ENCODE measurements at regions of chr4 and their contacts with region 1.

Region 1: DNA sequence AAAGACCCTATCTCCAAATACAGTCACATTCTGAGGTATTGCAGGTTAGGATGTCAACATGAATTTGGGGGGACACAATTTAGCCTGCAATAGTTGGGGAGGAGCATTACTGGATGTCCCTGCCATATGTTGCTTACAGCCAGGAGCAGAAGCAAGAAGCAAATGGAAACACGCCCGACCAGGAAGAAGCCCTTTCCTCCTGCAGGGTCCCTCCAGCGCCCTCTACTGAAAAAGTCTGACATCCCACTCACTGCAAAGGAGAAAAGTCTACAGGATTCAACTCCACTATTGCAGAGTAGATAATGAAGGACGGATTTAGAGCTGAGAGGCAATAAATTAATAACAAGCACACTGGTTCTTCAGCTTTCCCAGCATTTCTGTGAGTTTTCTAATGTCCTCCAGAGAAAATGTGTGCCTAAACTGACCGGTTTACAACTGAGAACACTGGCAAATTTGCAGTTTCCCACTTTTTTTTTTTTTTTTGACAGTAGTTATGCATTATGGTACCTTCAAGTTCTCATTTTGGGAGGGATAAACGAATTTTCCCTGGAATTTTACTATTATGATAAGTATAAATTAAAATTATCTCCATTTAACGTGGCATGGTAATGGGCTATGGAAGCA is 31.7 kb downstream of the COQ2 start:
- DNase-seq: peak in 1 of 2 donors; percentile 58
- ATAC-seq: peak in 5 of 8 donors; percentile 41 to 66 (median 59)
- H3K4me3 ChIP-seq: no peak overlapping the region
- H3K27ac ChIP-seq: no peak overlapping the region
- H3K4me1 ChIP-seq: peaks cover 0 to 28% (median 2%) of the 10 kb centered on the region in 9 donors
- H3K27me3 ChIP-seq: no peaks in the 10 kb centered on the region
- CTCF ChIP-seq: peak in 8 of 9 donors; percentile 14 to 82 (median 54)

Region 2: GRCh38 chr4:83089410-83090158 is 163.3 kb before region 1 on chr4:
- intact Hi-C with region 1: no loop called
- DNase-seq: no peak
- ATAC-seq: no peak
- H3K4me3 ChIP-seq: no peak overlapping the region
- H3K27ac ChIP-seq: no peak overlapping the region
- H3K4me1 ChIP-seq: peaks cover 0 to 6% (median 0%) of the 10 kb centered on the region in 9 donors
- H3K27me3 ChIP-seq: peaks cover 0 to 5% (median 0%) of the 10 kb centered on the region in 7 donors
- CTCF ChIP-seq: no peak

Region 3: DNA sequence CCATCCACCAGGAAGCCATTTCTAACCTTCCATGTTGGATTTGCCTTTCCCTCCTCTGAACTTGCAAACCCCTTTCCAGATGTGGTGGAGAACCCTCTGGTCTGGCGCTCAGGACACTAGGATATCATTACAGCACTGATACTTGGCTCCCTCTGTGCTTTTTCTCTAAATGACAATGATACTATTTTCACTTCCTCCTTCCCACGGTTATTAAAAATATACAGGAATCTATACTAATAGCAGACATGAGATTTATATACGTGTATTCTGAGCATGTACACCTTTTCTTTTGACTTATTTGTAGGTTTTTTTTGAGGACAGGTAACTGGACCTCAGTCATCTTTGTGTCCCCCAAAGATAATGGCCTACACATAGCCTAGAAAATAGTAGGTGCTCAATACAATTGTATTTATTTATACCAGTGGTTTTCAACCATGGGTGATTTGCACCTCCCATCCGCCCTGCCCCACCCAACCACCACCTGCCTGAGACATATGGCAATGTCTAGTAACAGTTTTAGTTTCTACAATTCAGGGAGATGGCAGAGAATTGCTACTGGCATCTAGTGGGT is 78.0 kb before region 1 on chr4:
- intact Hi-C with region 1: no loop called
- DNase-seq: no peak
- ATAC-seq: no peak
- H3K4me3 ChIP-seq: no peak overlapping the region
- H3K27ac ChIP-seq: no peak overlapping the region
- H3K4me1 ChIP-seq: peaks cover 0 to 12% (median 0%) of the 10 kb centered on the region in 9 donors
- H3K27me3 ChIP-seq: no peaks in the 10 kb centered on the region
- CTCF ChIP-seq: no peak

Region 4: DNA sequence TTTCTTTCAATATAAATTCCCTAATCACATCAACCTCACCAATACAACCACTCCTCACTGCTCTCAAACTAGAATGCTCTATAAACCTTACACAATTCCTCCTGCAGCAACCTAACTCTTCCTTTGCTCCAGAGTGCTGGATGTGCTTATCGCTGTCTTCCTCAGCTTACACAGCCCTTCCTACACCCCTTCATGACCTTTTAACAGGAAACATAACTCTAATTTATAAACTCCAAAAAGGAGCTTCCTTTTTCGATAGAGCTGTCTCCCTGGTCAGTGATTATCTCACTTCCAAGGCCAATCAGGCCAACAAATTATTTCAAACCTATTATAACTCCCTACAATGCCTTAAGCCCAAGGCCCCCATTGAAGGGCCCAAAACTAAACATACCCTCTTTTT is 47.1 kb before region 1 on chr4:
- intact Hi-C with region 1: loop called in 1 of 10 experiments (anchors 1 kb)
- DNase-seq: no peak
- ATAC-seq: no peak
- H3K4me3 ChIP-seq: no peak overlapping the region
- H3K27ac ChIP-seq: no peak overlapping the region
- H3K4me1 ChIP-seq: peaks cover 0 to 10% (median 0%) of the 10 kb centered on the region in 9 donors
- H3K27me3 ChIP-seq: no peaks in the 10 kb centered on the region
- CTCF ChIP-seq: no peak

Region 5: DNA sequence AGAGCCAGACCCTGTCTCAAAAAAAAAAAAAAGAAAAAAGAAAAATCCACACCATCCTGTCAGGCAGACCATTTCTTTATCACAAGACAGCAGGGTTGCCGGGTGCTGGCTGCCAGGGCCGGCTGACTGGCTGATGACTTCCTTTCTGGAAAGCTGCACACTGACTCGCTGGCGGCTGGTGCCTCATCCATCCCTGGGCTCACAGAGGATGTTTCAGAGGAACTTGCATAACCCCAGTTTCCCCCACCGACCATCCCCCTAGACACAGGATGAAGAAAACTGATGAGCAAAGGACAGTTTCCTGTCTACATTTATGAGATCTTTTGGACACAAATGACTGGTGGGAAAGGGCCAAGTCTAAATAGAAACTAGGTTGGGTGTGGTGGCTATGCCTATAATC is 67.7 kb after region 1 on chr4:
- intact Hi-C with region 1: no loop called
- DNase-seq: peak; percentile 45
- ATAC-seq: peak; percentile 37 to 81 (median 64)
- H3K4me3 ChIP-seq: no peak overlapping the region
- H3K27ac ChIP-seq: peak overlapping the region in 1 of 10 donors; percentile 77
- H3K4me1 ChIP-seq: peaks cover 0 to 32% (median 0%) of the 10 kb centered on the region in 9 donors
- H3K27me3 ChIP-seq: peaks cover 0 to 12% (median 0%) of the 10 kb centered on the region in 7 donors
- CTCF ChIP-seq: no peak

Region 6: DNA sequence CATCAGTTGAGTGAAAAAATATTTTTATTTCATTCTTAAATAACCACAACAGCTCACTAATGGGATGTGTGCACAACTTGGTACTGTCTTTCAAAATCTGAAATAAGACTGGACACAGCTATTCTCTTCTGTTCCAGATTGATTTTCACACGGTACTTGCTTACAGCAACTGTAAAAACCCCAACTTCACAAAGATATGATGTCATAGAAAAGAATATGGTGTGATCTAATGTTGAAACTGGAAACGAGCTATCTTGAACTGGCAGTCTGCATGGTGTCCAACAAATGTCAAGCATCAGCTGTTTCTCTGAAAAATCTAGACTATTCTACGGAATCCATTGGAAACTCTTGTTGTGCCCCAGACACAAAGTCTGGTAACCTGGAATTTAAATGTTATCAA is 188.0 kb after region 1 on chr4:
- intact Hi-C with region 1: no loop called
- DNase-seq: no peak
- ATAC-seq: no peak
- H3K4me3 ChIP-seq: no peak overlapping the region
- H3K27ac ChIP-seq: no peak overlapping the region
- H3K4me1 ChIP-seq: no peaks in the 10 kb centered on the region
- H3K27me3 ChIP-seq: no peaks in the 10 kb centered on the region
- CTCF ChIP-seq: no peak